ENCODE measurements at regions of chr2 and their contacts with region 1.

Region 1: DNA sequence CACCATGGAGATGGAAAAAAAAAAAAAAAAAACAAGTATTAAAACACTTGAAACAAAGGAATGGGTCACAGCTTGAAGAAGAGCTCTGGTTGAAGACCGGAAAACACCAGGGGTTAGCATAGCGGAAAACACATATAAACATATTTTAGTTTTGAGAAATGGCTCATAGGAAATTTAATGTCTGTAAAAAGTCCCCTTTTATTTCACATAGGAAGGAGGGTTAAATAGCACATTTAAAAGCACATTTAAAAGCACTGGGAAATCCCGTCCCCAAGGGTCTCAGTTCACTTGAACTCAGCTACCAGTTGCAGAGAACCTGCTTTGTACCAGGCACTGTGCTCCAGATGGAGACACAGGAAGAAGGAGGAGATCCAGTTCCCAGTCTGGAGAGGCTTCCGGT is 65.5 kb downstream of the KCNE4 start:
- DNase-seq: no peak
- ATAC-seq: no peak
- H3K4me3 ChIP-seq: no peak overlapping the region
- H3K27ac ChIP-seq: no peak overlapping the region
- H3K4me1 ChIP-seq: no peaks in the 10 kb centered on the region
- CTCF ChIP-seq: no peak
- EP300 ChIP-seq: no peak
- POLR2A ChIP-seq: no peak
- RAD21 ChIP-seq: no peak

Region 2: GRCh38 chr2:223051693-223052289 is 65.7 kb before region 1 on chr2 and contains the start of gene KCNE4:
- CTCF ChIA-PET with region 1: no interaction called
- POLR2A ChIA-PET with region 1: interaction called, 10 read pairs
- DNase-seq: no peak
- ATAC-seq: peak in 1 of 2 experiments; percentile 53; a peak in 3 of 6 replicates
- H3K4me3 ChIP-seq: peak within 1 kb of the TSS; percentile 43
- H3K27ac ChIP-seq: peak within 1 kb of the TSS; percentile 62 to 82
- H3K4me1 ChIP-seq: peaks cover 30% of the 10 kb centered on the region
- CTCF ChIP-seq: no peak
- EP300 ChIP-seq: no peak
- POLR2A ChIP-seq: no peak
- RAD21 ChIP-seq: no peak
- polyA plus RNA-seq, gene KCNE4: 3.6 and 4.1 TPM in 2 replicates